ENCODE measurements at regions of chr20 and their contacts with region 1.

Region 1: GRCh38 chr20:38221119-38221589 is 39.4 kb downstream of the KIAA1755 start:
- DNase-seq: peak; percentile 88
- CTCF ChIP-seq: peak; percentile 91

Region 2: GRCh38 chr20:37990571-37991151 is 230.5 kb before region 1 on chr20:
- CTCF ChIA-PET with region 1: interaction called, 13 read pairs
- POLR2A ChIA-PET with region 1: no interaction called
- DNase-seq: peak; percentile 86
- CTCF ChIP-seq: no peak

Region 3: DNA sequence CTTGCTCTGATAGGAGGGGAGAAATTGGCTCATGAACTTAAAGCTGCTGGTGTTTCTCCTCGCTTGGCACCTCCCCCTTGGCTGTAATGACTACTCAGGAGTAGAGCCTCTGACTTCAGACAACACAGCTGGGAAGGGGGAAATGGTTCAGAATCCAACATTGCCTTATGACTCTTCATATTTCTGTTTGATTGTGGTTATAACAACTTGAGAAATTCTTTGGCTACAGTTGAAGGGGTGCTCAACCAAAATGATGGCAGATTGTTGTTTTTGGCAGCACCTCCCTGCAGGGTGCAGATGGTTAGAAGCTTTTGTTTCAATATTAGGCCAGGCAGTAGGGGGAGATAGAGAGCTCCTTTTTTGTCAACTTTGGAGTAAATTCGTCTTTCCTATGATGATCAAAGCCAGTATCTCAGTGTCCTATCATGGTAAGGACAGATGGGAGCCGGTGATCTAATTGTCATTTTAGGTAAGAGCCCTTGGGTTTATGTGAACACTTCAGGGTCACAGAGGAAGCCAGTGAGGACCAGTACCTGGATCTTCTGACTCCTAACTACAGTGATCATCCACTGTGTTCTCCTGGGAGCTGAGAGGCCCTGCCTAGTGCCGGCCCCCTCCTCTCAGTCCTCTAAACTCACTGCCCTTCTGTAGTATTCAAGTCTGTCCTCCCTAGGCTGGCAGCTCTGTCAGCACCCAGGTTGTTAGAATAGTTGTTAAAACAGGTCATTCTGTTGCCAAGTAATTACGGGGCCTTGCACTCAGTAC is 147.7 kb before region 1 on chr20:
- CTCF ChIA-PET with region 1: interaction called, 103 read pairs
- POLR2A ChIA-PET with region 1: no interaction called
- DNase-seq: peak; percentile 46
- CTCF ChIP-seq: peak; percentile 58

Region 4: DNA sequence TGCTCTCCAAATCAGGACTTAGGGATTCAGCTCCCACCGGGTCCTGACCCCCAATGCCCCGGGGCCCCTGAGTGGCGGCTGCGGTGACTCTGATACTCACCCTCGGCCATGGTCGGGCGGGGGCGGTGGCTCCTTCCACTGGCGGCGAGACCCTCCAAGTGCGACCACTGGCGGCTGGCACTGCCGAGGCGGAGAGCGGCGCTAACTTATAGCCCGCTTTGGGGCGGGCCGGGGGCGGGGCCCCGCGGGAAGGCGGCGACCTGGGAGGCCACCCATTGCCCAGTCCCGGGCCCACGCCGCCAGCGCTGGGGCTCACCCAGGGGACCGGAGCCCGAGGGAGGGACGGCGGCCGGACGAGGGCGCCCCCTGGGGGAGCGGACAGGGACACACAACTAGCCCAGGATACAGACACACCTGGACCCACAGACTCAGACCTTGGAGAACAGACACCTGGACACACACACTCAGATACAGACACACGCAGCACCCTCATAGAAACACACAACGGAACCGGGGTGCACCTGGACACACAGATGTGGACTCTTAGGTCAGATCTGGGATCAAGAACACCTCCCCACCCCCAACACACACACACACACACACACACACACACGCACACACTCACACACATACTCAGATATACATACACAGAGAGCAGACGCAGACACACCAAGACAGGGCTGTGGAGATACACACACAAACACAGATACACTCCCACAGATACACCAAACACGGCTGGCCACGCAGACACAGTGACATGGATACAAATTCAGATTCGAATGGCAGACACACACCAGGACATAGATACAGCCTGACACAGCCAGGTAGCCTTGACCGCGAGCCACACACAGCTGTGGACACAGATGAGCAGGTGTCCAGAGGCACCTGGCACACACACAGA is 55.8 kb before region 1 on chr20 and contains the start of gene TGM2:
- CTCF ChIA-PET with region 1: interaction called, 19 read pairs
- POLR2A ChIA-PET with region 1: no interaction called
- DNase-seq: peak; percentile 89
- CTCF ChIP-seq: peak; percentile 74

Region 5: DNA sequence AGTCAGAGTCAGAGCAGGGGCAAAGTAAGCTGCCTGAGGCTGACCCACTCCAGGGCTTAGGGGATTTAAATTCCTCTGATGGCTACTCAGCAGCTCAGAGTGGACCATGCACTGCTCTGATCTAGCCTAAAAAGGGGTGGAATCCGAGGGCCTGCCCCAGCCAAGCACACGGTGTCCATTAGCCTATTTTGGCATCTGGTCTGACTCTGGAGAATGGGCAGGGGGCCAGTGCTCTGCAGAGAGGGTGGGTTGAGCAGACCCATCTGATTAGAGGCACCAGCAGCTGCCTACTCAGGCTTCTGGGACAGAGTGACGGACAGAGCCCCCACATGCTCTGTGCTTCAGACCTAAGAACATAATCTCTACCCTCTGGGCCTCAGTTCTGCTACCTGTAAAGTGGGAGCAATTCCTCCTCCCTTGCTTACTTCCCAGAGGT is 30.2 kb before region 1 on chr20:
- CTCF ChIA-PET with region 1: interaction called, 70 read pairs
- POLR2A ChIA-PET with region 1: interaction called, 8 read pairs
- DNase-seq: no peak
- CTCF ChIP-seq: no peak

Region 6: GRCh38 chr20:38260378-38261053 is 39.4 kb after region 1 on chr20 and contains the start of gene KIAA1755:
- CTCF ChIA-PET with region 1: no interaction called
- POLR2A ChIA-PET with region 1: no interaction called
- DNase-seq: no peak
- CTCF ChIP-seq: no peak

Region 7: GRCh38 chr20:39676857-39677391 is 1455.8 kb after region 1 on chr20:
- CTCF ChIA-PET with region 1: no interaction called
- POLR2A ChIA-PET with region 1: no interaction called
- DNase-seq: peak; percentile 28
- CTCF ChIP-seq: peak; percentile 21